ENCODE measurements at regions of chr7 and their contacts with region 1.

Region 1: DNA sequence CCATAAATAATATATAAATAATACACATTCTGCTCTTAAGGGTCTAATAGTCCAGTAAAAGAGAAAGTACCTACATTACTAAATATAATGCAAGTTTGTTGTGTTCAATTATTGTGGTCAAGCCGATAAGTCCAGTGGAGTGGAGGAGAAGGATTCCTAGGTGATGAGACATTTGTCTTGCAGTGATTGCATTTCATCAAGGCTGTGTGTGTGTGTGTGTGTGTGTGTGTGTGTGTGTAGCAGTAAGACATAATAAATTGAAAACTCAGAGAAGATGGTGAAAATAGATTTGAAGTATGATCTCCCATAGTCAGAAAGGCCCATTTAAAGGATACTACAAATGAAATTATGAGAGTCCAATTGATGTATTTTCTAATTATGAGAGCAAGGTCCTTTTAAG is 192.5 kb upstream of the SEMA3C start:
- DNase-seq: no peak
- ATAC-seq: no peak
- H3K4me3 Mint-ChIP-seq: no peak overlapping the region
- H3K27ac Mint-ChIP-seq: no peak overlapping the region
- H3K4me1 Mint-ChIP-seq: no peaks in the 10 kb centered on the region
- H3K27me3 Mint-ChIP-seq: no peaks in the 10 kb centered on the region

Region 2: GRCh38 chr7:81140775-81141174 is 29.4 kb after region 1 on chr7:
- CTCF ChIA-PET with region 1: no interaction called
- POLR2A ChIA-PET with region 1: no interaction called
- intact Hi-C with region 1: no loop called
- DNase-seq: no peak
- ATAC-seq: no peak
- H3K4me3 Mint-ChIP-seq: no peak overlapping the region
- H3K27ac Mint-ChIP-seq: no peak overlapping the region
- H3K4me1 Mint-ChIP-seq: no peaks in the 10 kb centered on the region
- H3K27me3 Mint-ChIP-seq: no peaks in the 10 kb centered on the region

Region 3: DNA sequence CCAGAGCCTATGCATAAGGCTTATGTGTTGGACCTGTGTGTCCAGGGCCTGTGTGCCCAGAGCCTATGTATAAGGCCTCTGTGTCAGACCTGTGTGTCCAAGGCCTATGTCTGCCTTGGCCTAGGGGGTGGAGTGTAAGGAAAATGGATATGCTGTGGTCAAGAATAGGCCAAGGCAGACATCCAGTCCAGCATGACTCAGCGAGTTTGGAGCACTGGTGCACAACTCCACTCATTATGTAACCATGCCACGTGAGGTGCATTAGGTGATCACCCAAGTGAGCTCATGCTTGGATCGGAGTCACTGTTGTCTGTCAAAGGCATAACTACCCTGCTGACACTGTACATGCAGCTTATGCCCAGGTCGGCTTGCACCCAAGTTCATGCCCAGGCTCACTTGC is 1093.3 kb after region 1 on chr7:
- CTCF ChIA-PET with region 1: no interaction called
- POLR2A ChIA-PET with region 1: no interaction called
- intact Hi-C with region 1: loop called in 1 of 2 experiments (anchors 5 kb)
- DNase-seq: no peak
- ATAC-seq: no peak
- H3K4me3 Mint-ChIP-seq: no peak overlapping the region
- H3K27ac Mint-ChIP-seq: no peak overlapping the region
- H3K4me1 Mint-ChIP-seq: no peaks in the 10 kb centered on the region
- H3K27me3 Mint-ChIP-seq: no peaks in the 10 kb centered on the region

Measured in activated CD4-positive, alpha-beta T cell treated with anti-CD3 and anti-CD28 coated beads for 36 hours (primary cell).